HEK293 (cell line): ENCODE measurements at regions of chr11 and their contacts with region 1.

Region 1: GRCh38 chr11:61187505-61188130 is 15.7 kb upstream of the PGA3 start:
- H3K4me3 ChIP-seq: no peak overlapping the region
- H3K27ac ChIP-seq: no peak overlapping the region
- H3K4me1 ChIP-seq: no peaks in the 10 kb centered on the region
- CTCF ChIP-seq: peak; percentile 32; the same call in 1 of the 2 replicates

Region 2: DNA sequence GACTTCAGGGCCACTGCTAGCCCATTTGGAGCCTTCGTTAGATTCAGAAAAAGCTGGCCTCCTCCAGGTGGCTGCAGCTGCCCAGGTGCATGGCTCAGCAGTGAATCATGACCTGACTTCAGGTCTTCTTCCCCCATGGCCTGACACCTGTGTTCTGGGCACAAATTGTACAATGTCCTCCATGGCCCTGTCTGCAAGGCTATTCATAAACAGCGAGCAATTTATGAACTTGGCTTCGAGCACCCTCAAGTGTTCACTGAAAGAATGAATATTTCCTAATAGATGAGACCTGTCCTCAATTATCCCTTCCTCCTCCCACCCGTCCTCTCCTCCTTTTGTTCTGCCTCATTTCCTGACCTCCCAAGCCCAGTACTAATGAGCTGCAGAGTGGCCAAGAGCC is 14.2 kb before region 1 on chr11:
- CTCF ChIA-PET with region 1: interaction called, 27 read pairs
- POLR2A ChIA-PET with region 1: no interaction called
- H3K4me3 ChIP-seq: no peak overlapping the region
- H3K27ac ChIP-seq: no peak overlapping the region
- H3K4me1 ChIP-seq: no peaks in the 10 kb centered on the region
- CTCF ChIP-seq: no peak

Region 3: GRCh38 chr11:61198361-61198760 is 10.7 kb after region 1 on chr11:
- CTCF ChIA-PET with region 1: interaction called, 12 read pairs
- POLR2A ChIA-PET with region 1: no interaction called
- H3K4me3 ChIP-seq: no peak overlapping the region
- H3K27ac ChIP-seq: no peak overlapping the region
- H3K4me1 ChIP-seq: no peaks in the 10 kb centered on the region
- CTCF ChIP-seq: no peak

Region 4: DNA sequence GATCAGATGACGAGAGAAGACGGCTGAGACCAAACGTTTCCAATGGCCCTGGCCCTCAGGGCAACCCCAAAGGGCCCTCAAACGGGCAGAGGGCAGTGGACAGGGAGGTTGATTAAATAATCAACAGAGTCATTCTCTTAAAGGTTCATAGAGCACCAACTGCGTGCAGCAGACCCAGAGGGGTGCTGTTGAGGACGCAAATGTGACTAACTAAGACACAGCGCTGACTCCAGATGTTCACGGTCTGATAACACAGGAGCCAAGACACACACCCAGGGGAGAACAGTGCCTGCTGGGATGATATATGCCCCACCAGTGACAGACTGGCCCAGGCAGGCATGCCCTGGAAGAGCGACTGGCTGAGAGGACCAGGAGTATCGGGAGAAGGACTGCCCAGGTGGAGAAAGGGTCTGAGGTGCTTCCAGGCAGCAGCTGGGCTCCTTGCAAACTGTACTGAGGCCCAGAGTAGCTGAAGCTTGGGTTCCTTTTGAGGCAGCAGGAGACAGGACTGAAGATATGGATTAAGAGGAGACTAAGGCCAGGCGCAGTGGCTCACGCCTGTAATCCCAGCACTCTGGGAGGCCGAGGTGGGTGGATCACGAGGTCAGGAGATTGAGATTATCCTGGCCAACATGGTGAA is 99.8 kb after region 1 on chr11:
- CTCF ChIA-PET with region 1: no interaction called
- POLR2A ChIA-PET with region 1: no interaction called
- H3K4me3 ChIP-seq: no peak overlapping the region
- H3K27ac ChIP-seq: no peak overlapping the region
- H3K4me1 ChIP-seq: no peaks in the 10 kb centered on the region
- CTCF ChIP-seq: no peak

Region 5: DNA sequence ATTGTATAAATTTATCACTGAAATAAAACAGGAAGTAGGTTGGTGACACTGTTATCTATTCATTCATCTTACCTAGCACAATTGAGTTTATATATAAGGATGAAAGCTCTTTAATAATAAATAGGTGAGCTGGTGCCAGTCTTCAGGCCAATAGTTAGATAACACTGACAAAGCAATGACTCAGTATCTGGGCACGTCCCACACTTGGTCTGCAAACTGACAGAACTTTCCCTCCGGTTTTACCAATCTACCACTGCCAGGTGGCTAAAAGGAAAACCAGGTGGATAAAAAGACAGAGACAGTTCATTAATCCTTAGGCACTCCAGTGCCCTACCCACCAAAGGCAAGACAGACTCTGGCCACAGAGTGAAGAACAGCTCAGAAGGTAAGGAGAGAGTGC is 127.6 kb after region 1 on chr11:
- CTCF ChIA-PET with region 1: no interaction called
- POLR2A ChIA-PET with region 1: no interaction called
- H3K4me3 ChIP-seq: no peak overlapping the region
- H3K27ac ChIP-seq: no peak overlapping the region
- H3K4me1 ChIP-seq: no peaks in the 10 kb centered on the region
- CTCF ChIP-seq: no peak

Region 6: GRCh38 chr11:61477727-61478148 is 290.1 kb after region 1 on chr11:
- CTCF ChIA-PET with region 1: no interaction called
- POLR2A ChIA-PET with region 1: no interaction called
- H3K4me3 ChIP-seq: no peak overlapping the region
- H3K27ac ChIP-seq: no peak overlapping the region
- H3K4me1 ChIP-seq: no peaks in the 10 kb centered on the region
- CTCF ChIP-seq: peak; percentile 71

Region 7: GRCh38 chr11:61495801-61496597 is 308.4 kb after region 1 on chr11:
- CTCF ChIA-PET with region 1: no interaction called
- POLR2A ChIA-PET with region 1: no interaction called
- H3K4me3 ChIP-seq: no peak overlapping the region
- H3K27ac ChIP-seq: no peak overlapping the region
- H3K4me1 ChIP-seq: no peaks in the 10 kb centered on the region
- CTCF ChIP-seq: no peak